ENCODE measurements at regions of chr3 and their contacts with region 1.

Region 1: DNA sequence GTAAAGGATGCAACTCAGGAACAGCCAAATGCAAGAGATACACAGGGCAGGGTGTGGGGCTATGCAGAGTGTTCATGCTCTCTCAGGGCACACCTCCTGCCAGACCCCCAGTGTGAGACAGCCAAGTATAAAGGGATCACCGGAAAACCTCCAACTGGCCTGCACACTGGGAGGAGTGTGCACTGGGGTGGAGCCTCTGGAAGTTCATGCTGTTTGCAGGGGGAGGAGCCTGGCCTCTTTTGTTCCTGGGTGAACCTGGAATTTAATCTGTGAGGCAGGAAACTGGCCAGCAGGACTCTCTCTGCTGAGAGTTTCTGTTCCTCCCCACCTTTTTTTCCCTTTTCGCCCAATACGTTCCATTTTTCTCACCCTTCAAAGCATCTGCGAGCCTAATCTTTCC is 204.1 kb downstream of the WNT5A start:
- DNase-seq: no peak
- H3K4me3 ChIP-seq: no peak overlapping the region
- H3K27me3 ChIP-seq: no peaks in the 10 kb centered on the region
- CTCF ChIP-seq: no peak

Region 2: GRCh38 chr3:55091381-55092225 is 191.4 kb before region 1 on chr3:
- CTCF ChIA-PET with region 1: no interaction called
- POLR2A ChIA-PET with region 1: no interaction called
- DNase-seq: peak; percentile 32
- H3K4me3 ChIP-seq: no peak overlapping the region
- H3K27me3 ChIP-seq: peaks cover under 1% of the 10 kb centered on the region
- CTCF ChIP-seq: no peak

Region 3: DNA sequence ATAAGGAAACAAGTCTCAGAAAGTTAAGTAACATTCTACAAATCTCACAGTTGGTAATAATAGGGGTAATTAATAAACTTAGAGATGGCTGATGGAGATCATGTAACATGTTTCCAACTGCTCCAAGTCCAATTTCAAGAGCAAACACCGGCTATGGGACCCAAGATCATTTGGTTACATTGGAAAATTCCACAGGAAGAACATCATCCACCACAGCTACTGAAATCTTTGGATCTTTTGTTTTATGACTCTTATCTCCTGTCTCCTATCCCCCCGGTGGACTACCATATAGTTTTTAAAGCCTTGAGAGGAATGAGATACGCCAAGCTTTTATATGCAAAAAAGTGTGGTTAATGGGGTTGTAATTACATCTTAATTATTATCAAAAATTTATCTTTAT is 12.0 kb before region 1 on chr3:
- CTCF ChIA-PET with region 1: interaction called, 16 read pairs
- POLR2A ChIA-PET with region 1: interaction called, 5 read pairs
- DNase-seq: no peak
- H3K4me3 ChIP-seq: no peak overlapping the region
- H3K27me3 ChIP-seq: no peaks in the 10 kb centered on the region
- CTCF ChIP-seq: no peak

Region 4: DNA sequence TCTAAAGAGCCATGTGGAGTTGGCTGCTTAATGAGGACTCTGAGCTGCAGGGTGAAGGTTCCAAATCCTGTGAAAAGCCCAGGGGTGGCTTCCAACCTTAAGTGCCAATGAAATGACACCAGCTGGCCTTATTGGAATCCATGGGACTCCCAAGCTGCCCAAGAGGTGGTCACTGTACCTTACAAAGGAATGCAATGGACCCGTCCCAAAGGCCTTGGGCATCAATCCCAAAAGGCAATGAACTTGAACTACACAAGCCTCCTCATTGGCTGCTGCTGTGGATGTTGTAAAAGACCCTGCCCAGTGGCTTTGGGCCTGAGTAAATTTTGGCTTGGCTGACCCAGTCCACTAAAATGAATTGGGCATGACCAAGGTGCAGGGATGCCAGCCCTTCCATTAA is 74.8 kb after region 1 on chr3:
- CTCF ChIA-PET with region 1: no interaction called
- POLR2A ChIA-PET with region 1: no interaction called
- DNase-seq: no peak
- H3K4me3 ChIP-seq: no peak overlapping the region
- H3K27me3 ChIP-seq: no peaks in the 10 kb centered on the region
- CTCF ChIP-seq: no peak